Adrenal gland (tissue), 19 donors: ENCODE measurements at regions of chr17 and their contacts with region 1.

Region 1: DNA sequence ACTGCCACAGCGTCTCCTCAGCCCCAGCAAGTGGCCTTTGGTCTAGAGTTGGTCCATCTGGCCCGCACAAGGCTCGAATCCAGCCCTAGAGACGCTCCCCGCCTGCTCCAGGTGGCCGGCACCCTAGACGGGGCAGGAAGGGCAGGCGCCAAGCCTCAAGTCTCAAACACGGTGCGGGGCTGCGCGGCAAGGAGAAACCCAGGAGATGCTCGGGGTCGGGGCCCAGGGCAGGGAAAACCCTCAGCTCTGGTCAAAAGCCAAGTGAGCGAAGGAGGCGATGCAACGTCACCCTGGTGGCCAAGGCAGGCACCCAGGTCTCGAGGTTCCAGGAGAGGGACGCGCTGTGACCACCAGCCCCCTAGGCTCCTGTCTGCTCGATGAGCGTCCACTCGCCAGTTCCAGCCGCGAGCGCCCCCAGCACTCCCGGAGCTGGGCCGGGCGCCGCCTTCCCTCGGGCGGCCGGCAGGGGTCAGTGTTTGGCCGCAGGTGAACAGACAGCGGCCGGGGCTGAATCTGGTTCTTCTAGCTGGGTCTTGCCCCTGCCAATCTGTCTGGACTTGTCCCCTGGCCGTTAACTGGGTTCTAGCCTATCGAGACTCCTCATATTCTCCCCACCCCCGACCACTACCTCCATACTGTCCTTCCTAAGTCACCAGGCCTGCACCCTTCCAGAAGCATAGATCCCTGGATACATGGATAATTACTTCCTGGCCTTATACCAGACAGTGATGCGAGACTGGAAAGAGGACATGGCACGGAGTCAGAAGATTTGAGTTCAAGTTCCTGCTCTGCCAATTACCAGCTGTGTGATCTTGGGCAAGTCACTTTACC is 44.0 kb downstream of the PRAC1 start:
- DNase-seq: peak; percentile 49 to 74 (median 69)
- H3K4me3 ChIP-seq: no peak overlapping the region
- H3K27ac ChIP-seq: no peak overlapping the region
- H3K4me1 ChIP-seq: peaks cover 0 to 5% of the 10 kb centered on the region in 2 donors
- H3K27me3 ChIP-seq: peaks cover 19% of the 10 kb centered on the region
- CTCF ChIP-seq: peak; percentile 71 to 96 (median 84)
- POLR2A ChIP-seq: no peak

Region 2: GRCh38 chr17:48505787-48506645 is 172.3 kb before region 1 on chr17:
- intact Hi-C with region 1: no loop called
- DNase-seq: peak; percentile 49 to 86 (median 72)
- H3K4me3 ChIP-seq: no peak overlapping the region
- H3K27ac ChIP-seq: peak overlapping the region in 1 of 5 donors; percentile 67
- H3K4me1 ChIP-seq: peaks cover 0 to 11% of the 10 kb centered on the region in 2 donors
- H3K27me3 ChIP-seq: no peaks in the 10 kb centered on the region
- CTCF ChIP-seq: no peak
- POLR2A ChIP-seq: no peak

Region 3: GRCh38 chr17:48543107-48543853 is 135.1 kb before region 1 on chr17:
- intact Hi-C with region 1: no loop called
- DNase-seq: peak in 6 of 7 donors; percentile 48 to 79 (median 58)
- H3K4me3 ChIP-seq: peak overlapping the region in 3 of 4 donors; percentile 33 to 78 (median 58)
- H3K27ac ChIP-seq: peak overlapping the region; percentile 72 to 97 (median 85)
- H3K4me1 ChIP-seq: peaks cover 20 to 30% of the 10 kb centered on the region in 2 donors
- H3K27me3 ChIP-seq: no peaks in the 10 kb centered on the region
- CTCF ChIP-seq: peak in 4 of 6 experiments; percentile 28 to 33 (median 32)
- POLR2A ChIP-seq: peak in 1 of 2 donors; percentile 51

Region 4: DNA sequence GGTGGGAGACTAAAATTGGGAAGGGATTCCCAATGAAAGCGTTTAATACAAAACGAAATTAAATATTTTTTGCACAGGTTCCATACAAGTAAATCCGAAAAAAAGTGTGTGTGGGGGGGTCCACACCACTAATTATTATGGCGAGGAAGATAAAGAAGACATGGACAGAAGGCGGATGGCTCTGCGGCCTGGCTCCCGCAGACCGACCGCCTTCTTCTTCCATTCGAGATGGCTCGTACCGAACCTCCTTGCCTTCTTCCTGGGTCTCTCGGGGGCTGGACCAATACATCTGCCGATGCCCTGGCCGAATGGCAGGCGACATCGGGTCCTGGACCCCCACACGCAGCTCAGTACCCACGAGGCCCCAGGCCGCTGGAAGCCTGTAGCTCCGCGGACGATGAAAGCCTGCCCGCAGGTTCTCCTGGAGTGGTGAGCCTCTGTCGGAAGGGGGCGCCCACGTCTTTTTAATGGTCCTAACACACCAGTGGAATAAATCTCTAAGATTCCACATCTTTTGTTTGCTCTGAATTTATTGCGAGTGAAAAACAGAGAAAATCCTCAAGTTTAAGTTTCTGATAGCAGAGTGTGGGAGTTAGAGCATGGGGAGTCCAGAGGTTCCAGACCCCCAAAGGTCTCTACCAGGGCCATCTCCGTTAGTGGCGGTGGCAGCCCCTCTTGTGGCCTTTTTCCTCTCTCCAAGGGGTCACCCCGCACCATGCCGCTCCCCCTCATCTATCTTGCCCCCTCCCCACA is 46.1 kb after region 1 on chr17:
- intact Hi-C with region 1: loop called in 1 of 2 experiments (anchors 5 kb)
- DNase-seq: peak; percentile 82 to 94 (median 86)
- H3K4me3 ChIP-seq: peak overlapping the region in 1 of 4 donors; percentile 13
- H3K27ac ChIP-seq: no peak overlapping the region
- H3K4me1 ChIP-seq: peaks cover 0 to 6% of the 10 kb centered on the region in 2 donors
- H3K27me3 ChIP-seq: peaks cover 98% of the 10 kb centered on the region
- CTCF ChIP-seq: peak; percentile 42 to 71 (median 70)
- POLR2A ChIP-seq: no peak

Region 5: GRCh38 chr17:48816774-48817590 is 138.6 kb after region 1 on chr17 and contains the start of gene TTLL6:
- intact Hi-C with region 1: no loop called
- DNase-seq: peak; percentile 86 to 94 (median 88)
- H3K4me3 ChIP-seq: peak within 1 kb of the TSS in 2 of 4 donors; percentile 10 to 43
- H3K27ac ChIP-seq: peak within 1 kb of the TSS in 1 of 5 donors; percentile 30
- H3K4me1 ChIP-seq: peaks cover 6 to 14% of the 10 kb centered on the region in 2 donors
- H3K27me3 ChIP-seq: no peaks in the 10 kb centered on the region
- CTCF ChIP-seq: no peak
- POLR2A ChIP-seq: no peak
- total RNA-seq, gene TTLL6: under 0.01 to 0.55 (median 0.40) TPM in 5 of 9 donors, not detected in the others